Mammary epithelial cell (primary cell): ENCODE measurements at regions of chr15 and their contacts with region 1.

Region 1: GRCh38 chr15:58182460-58183163 is 44.4 kb downstream of the AQP9 start:
- DNase-seq: peak; percentile 45
- H3K4me3 ChIP-seq: no peak overlapping the region
- H3K27ac ChIP-seq: no peak overlapping the region
- H3K4me1 ChIP-seq: peaks cover 22% of the 10 kb centered on the region
- H3K27me3 ChIP-seq: no peaks in the 10 kb centered on the region
- CTCF ChIP-seq: peak; percentile 97 to 99

Region 2: GRCh38 chr15:57640935-57641682 is 541.5 kb before region 1 on chr15:
- CTCF ChIA-PET with region 1: no interaction called
- dilution Hi-C with region 1: no loop called
- in situ Hi-C with region 1: no loop called
- intact Hi-C with region 1: loop called (anchors 10 kb)
- DNase-seq: peak; percentile 30
- H3K4me3 ChIP-seq: no peak overlapping the region
- H3K27ac ChIP-seq: no peak overlapping the region
- H3K4me1 ChIP-seq: no peaks in the 10 kb centered on the region
- H3K27me3 ChIP-seq: no peaks in the 10 kb centered on the region
- CTCF ChIP-seq: peak; percentile 41 to 60

Region 3: GRCh38 chr15:57866149-57866736 is 316.4 kb before region 1 on chr15:
- CTCF ChIA-PET with region 1: no interaction called
- dilution Hi-C with region 1: no loop called
- in situ Hi-C with region 1: loop called in 1 of 2 experiments (anchors 25 kb)
- intact Hi-C with region 1: loop called (anchors 1 kb)
- DNase-seq: peak; percentile 36
- H3K4me3 ChIP-seq: no peak overlapping the region
- H3K27ac ChIP-seq: no peak overlapping the region
- H3K4me1 ChIP-seq: no peaks in the 10 kb centered on the region
- H3K27me3 ChIP-seq: no peaks in the 10 kb centered on the region
- CTCF ChIP-seq: peak; percentile 92 to 93

Region 4: DNA sequence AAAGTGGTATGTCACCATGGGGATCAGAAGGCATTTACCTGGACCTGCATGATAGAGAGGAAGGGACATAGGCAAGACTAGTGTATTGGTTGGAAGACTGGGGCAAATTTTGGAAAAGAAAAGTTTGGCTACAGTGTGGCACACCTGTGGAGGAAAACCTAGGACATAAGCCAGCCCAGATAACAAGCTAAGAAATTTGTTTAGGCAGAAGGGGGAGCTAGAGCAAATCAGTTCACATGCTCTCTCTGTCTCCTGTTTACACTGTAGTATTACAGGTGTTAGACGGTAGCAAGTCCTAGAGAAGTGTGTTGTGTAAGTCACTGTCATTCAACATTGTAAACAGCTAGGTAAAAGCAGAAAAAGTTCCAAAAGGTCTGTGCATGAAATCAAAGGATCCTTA is 105.2 kb before region 1 on chr15:
- CTCF ChIA-PET with region 1: no interaction called
- dilution Hi-C with region 1: no loop called
- in situ Hi-C with region 1: loop called (anchors 5 kb)
- intact Hi-C with region 1: loop called (anchors 1 kb)
- DNase-seq: peak; percentile 32
- H3K4me3 ChIP-seq: no peak overlapping the region
- H3K27ac ChIP-seq: no peak overlapping the region
- H3K4me1 ChIP-seq: no peaks in the 10 kb centered on the region
- H3K27me3 ChIP-seq: no peaks in the 10 kb centered on the region
- CTCF ChIP-seq: peak; percentile 30 to 64

Region 5: GRCh38 chr15:58221591-58222241 is 39.1 kb after region 1 on chr15:
- CTCF ChIA-PET with region 1: no interaction called
- dilution Hi-C with region 1: no loop called
- in situ Hi-C with region 1: no loop called
- intact Hi-C with region 1: loop called (anchors 1 kb)
- DNase-seq: no peak
- H3K4me3 ChIP-seq: no peak overlapping the region
- H3K27ac ChIP-seq: no peak overlapping the region
- H3K4me1 ChIP-seq: peaks cover 8% of the 10 kb centered on the region
- H3K27me3 ChIP-seq: no peaks in the 10 kb centered on the region
- CTCF ChIP-seq: peak; percentile 57 to 83

Region 6: DNA sequence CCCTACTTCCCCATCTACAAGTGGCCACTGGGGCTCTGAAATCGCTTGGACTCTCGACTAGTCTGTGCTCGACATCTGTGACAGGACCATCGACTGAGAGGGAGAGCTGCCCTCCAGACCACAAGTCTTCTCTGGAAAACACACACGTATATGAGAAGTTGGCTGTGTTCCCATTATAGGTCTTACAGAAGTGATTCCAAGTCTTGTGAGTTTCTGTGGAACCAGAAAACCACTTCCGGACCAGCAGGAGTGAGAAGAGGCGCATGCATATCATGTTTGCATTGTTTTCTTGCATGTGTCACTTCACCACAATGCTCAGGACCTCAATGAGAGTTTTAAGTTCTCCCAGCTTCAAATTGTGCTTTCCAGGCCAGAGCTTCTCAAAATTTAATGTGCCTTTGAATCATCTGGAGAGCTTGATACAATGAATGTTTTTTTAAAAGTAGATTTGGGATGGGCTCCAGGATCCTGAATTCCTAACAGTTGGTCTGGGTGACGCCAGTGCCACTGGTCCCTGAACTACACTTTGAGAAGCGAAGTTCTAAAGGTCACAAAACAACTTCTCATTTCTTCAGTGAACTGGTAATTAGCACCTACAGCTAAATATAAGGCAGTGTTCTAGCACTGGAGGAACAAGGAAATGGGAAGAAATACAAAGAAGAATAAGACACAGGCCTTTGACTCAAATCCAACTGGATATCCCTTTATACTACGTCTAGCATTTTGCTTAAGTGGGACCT is 264.8 kb after region 1 on chr15:
- CTCF ChIA-PET with region 1: no interaction called
- dilution Hi-C with region 1: no loop called
- in situ Hi-C with region 1: no loop called
- intact Hi-C with region 1: no loop called
- DNase-seq: peak; percentile 79
- H3K4me3 ChIP-seq: no peak overlapping the region
- H3K27ac ChIP-seq: no peak overlapping the region
- H3K4me1 ChIP-seq: peaks cover 6% of the 10 kb centered on the region
- H3K27me3 ChIP-seq: no peaks in the 10 kb centered on the region
- CTCF ChIP-seq: no peak